ENCODE measurements at regions of chr13 and their contacts with region 1.

Region 1: DNA sequence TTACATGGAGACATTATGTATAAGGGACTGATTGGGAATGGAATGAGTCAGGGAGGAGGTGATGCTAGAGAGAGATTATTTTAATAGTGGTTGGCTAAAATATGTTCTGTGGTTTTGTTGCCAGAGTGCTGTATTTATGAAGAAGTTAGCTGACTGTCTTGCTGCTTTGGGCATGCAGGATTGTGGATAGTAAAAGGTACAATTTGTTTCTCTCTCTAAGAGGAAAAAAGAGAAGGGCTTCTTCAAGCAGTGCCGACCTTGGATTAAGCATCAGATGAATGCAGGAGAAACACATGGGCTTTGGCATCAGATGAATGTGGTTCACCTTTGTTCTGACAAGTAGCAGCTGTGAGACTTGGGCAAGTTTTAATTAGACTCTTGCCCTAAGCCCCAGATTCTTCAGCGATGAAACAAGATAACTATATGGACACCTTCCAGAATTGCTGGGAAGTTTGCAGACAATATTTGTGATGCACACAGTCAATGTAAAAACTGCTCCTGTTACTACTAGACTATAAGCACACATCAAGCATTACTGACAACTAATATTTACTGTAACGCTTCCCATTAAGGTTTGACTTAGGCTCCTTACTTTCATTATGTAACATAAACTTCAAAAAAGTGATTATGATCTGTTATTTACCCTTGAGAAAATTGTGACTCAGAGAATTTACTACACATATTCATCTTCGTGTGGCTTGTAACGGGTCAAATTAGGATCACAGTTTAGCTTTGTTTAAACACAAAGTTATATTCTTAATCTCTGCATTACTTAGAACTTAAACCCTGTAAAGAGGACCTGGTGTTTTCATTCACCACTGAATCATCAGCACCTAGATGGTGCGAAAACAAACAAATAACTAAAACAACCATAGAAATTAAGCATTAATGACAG is 824.0 kb downstream of the PCDH9 start:
- DNase-seq: peak; percentile 58
- ATAC-seq: peak; percentile 67
- H3K4me3 ChIP-seq: peak overlapping the region; percentile 15
- H3K27ac ChIP-seq: peak overlapping the region; percentile 86
- H3K4me1 ChIP-seq: peaks cover 51% of the 10 kb centered on the region
- H3K27me3 ChIP-seq: no peaks in the 10 kb centered on the region
- CTCF ChIP-seq: no peak

Region 2: GRCh38 chr13:66329988-66330431 is 76.1 kb before region 1 on chr13:
- CTCF ChIA-PET with region 1: no interaction called
- POLR2A ChIA-PET with region 1: no interaction called
- intact Hi-C with region 1: no loop called
- DNase-seq: no peak
- ATAC-seq: no peak
- H3K4me3 ChIP-seq: no peak overlapping the region
- H3K27ac ChIP-seq: no peak overlapping the region
- H3K4me1 ChIP-seq: no peaks in the 10 kb centered on the region
- H3K27me3 ChIP-seq: no peaks in the 10 kb centered on the region
- CTCF ChIP-seq: no peak

Region 3: DNA sequence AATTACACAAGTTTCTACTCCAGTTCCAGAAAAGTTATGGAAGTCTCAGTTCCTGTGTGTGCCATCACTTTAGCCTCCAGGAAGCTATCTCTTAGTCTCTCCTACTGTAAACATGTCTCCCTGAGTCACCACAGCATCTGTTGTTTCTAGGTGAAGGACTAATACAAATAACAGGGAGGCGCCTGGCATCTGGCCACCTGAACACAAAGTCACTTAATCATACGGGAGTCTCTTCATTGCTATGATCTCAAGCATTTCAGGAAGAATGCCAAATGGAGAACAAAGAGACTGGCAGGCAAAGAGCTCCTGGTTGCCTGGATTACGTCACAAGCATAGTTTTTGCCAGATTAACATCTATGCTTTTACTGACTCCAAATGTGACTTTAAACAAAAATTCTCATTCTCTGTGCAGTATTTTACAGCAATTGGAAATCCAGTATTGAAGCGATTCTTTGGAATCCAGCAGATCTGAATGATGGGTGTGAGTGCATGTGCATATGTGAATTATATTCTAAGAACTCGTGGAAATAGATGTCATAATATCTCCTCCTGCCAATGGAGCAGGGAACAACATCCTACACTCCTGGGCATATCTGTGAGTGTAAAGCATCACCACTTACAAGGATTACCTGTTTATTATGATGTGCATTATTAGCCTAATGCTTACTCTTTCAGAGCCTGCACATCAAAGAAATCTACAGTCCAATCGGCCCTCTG is 251.2 kb after region 1 on chr13:
- CTCF ChIA-PET with region 1: no interaction called
- POLR2A ChIA-PET with region 1: interaction called, 4 read pairs
- intact Hi-C with region 1: loop called (anchors 2 kb)
- DNase-seq: peak; percentile 97
- ATAC-seq: peak; percentile 96
- H3K4me3 ChIP-seq: no peak overlapping the region
- H3K27ac ChIP-seq: peak overlapping the region; percentile 82
- H3K4me1 ChIP-seq: peaks cover 25% of the 10 kb centered on the region
- H3K27me3 ChIP-seq: no peaks in the 10 kb centered on the region
- CTCF ChIP-seq: no peak

Region 4: DNA sequence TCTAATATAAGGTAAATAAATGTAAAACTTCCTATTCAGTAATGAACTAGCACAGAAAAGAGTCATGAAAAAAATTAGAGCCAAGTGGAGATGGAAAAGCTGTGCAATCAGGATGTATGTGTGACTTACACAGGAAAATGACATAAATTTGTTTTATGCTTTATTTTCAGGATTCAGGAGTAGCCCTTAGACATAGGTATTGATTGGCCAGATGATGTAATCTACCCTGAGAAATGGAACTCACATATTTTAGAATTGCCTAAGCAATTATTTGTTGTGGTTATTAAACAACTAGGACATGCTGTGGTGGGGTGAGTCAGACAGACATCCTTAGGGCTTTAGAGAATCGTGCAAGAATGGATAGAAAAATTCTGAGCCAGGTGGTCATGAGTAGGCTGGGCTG is 713.3 kb after region 1 on chr13:
- CTCF ChIA-PET with region 1: no interaction called
- POLR2A ChIA-PET with region 1: no interaction called
- intact Hi-C with region 1: loop called (anchors 10 kb)
- DNase-seq: peak; percentile 79
- ATAC-seq: peak; percentile 89
- H3K4me3 ChIP-seq: no peak overlapping the region
- H3K27ac ChIP-seq: peak overlapping the region; percentile 53; the same call in 1 of the 2 replicates
- H3K4me1 ChIP-seq: peaks cover 27% of the 10 kb centered on the region
- H3K27me3 ChIP-seq: no peaks in the 10 kb centered on the region
- CTCF ChIP-seq: no peak

Region 5: GRCh38 chr13:67230404-67231288 is 824.5 kb after region 1 on chr13:
- CTCF ChIA-PET with region 1: no interaction called
- POLR2A ChIA-PET with region 1: no interaction called
- intact Hi-C with region 1: loop called (anchors 1 kb)
- DNase-seq: peak; percentile 89
- ATAC-seq: peak; percentile 83
- H3K4me3 ChIP-seq: peak overlapping the region; percentile 88
- H3K27ac ChIP-seq: no peak overlapping the region; the same call in 1 of the 2 replicates
- H3K4me1 ChIP-seq: 0 out of 2 replicates have a peak, but pooled peaks cover 3% of the 10 kb centered on the region
- H3K27me3 ChIP-seq: no peaks in the 10 kb centered on the region
- CTCF ChIP-seq: no peak